CD8-positive, alpha-beta T cell (primary cell): ENCODE measurements at regions of chr1 and their contacts with region 1.

Region 1: DNA sequence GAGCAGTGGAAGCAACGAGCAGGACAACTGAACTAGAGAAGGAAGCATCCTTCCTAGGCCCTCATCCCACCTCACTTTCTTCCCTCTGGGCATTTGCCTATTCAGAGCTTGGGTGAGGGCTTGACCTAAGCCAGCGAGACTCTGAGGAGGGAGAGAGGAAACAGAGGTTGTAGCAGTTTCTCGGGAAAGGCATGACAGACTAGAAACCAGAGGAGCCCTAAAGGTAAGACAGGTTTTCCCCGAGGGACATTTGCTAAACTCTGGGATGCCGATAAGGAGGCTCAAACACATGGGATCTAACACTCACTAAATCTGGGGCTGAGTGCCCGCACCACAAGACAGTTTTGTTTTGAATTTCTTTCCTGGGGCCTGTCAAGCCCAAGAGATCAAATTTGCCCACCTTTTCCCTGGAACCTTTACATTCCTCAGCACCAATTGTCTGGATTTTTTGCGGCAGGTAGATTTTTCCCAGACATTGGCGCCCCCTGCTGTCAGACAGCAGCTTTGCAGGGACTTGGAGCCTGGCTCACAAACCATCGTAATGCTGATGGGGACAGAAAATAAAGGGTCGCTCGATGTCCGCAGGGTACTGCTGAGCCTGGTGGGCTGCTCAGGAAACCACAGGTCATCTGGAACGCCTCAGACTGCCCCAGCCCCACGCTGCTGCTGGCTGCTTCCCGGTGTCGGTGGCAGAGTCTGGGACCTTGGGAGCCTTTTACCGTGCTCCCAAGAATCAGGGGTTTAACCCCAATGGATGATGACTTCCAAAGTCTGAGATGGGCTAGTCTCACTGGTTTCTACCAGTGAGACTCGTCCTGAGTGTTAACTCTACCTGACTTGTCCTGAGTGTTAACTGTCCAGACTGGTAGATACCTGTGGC is 23.4 kb upstream of the TSPAN2 start:
- DNase-seq: peak; percentile 26 to 79 (median 60)
- ATAC-seq: peak; percentile 64
- H3K4me3 ChIP-seq: no peak overlapping the region
- H3K4me3 Mint-ChIP-seq: no peak overlapping the region
- H3K27ac ChIP-seq: no peak overlapping the region
- H3K27ac Mint-ChIP-seq: no peak overlapping the region
- H3K4me1 ChIP-seq: no peaks in the 10 kb centered on the region
- H3K4me1 Mint-ChIP-seq: peaks cover 15% of the 10 kb centered on the region
- H3K27me3 ChIP-seq: no peaks in the 10 kb centered on the region
- H3K27me3 Mint-ChIP-seq: peaks cover 4% of the 10 kb centered on the region
- CTCF ChIP-seq: peak; percentile 99

Region 2: DNA sequence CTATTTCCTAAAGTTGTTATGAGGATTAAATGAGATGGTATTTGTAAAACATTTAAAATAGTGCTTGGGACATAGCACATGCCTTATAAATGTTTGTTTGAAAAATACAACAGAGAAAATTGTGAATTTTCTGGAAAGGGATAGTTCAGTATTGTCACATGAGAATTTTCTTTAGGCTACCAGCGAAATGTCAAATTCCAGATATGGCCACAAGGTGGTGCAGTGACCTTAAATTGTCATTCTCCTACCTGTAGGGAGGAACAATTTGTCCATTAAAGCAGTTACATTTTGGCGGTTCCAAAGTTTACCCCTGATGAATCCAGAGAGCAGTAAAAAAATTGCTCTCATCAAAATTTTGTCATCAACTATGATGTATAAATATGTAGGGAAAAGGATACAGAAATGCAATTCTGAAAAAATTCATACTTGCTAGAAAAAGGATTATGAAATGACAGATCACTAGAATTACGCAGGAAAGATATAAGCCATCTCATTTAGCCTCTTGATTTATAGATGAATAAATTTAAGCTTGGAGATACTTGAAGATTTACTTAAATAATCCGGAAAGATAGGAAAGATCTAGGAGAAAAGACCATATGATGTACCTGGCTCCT is 133.4 kb before region 1 on chr1:
- CTCF ChIA-PET with region 1: interaction called, 77 read pairs
- POLR2A ChIA-PET with region 1: interaction called, 3 read pairs
- intact Hi-C with region 1: loop called (anchors 1 kb)
- DNase-seq: peak; percentile 42 to 79 (median 76)
- ATAC-seq: no peak
- H3K4me3 ChIP-seq: no peak overlapping the region
- H3K4me3 Mint-ChIP-seq: no peak overlapping the region
- H3K27ac ChIP-seq: no peak overlapping the region
- H3K27ac Mint-ChIP-seq: no peak overlapping the region
- H3K4me1 ChIP-seq: no peaks in the 10 kb centered on the region
- H3K4me1 Mint-ChIP-seq: no peaks in the 10 kb centered on the region
- H3K27me3 ChIP-seq: peaks cover 0 to 2% of the 10 kb centered on the region in 2 experiments
- H3K27me3 Mint-ChIP-seq: peaks cover 20% of the 10 kb centered on the region
- CTCF ChIP-seq: peak; percentile 97

Region 3: GRCh38 chr1:114986286-114986685 is 126.5 kb before region 1 on chr1:
- CTCF ChIA-PET with region 1: interaction called, 77 read pairs
- POLR2A ChIA-PET with region 1: interaction called, 3 read pairs
- intact Hi-C with region 1: no loop called
- DNase-seq: no peak
- ATAC-seq: no peak
- H3K4me3 ChIP-seq: no peak overlapping the region
- H3K4me3 Mint-ChIP-seq: no peak overlapping the region
- H3K27ac ChIP-seq: no peak overlapping the region
- H3K27ac Mint-ChIP-seq: no peak overlapping the region
- H3K4me1 ChIP-seq: no peaks in the 10 kb centered on the region
- H3K4me1 Mint-ChIP-seq: no peaks in the 10 kb centered on the region
- H3K27me3 ChIP-seq: no peaks in the 10 kb centered on the region
- H3K27me3 Mint-ChIP-seq: peaks cover 4% of the 10 kb centered on the region
- CTCF ChIP-seq: no peak

Region 4: DNA sequence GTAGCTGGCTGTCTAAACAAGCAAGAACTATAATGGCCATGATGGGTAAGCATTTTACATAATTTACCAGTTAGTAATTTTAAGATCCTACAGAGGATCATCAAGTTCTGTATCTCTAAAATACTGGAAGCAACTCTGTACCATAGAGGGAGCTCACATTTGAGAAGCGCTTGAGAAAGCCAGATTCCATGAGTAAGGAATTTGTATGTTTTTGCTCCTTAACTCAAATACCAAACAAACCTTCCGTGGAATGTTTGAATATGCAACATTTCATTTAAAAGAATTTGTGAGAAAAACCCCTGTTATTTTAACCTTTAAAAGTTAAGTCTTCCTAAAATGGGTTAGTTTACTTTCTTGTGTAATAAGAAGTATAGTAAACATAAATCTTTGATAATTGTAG is 81.1 kb before region 1 on chr1:
- CTCF ChIA-PET with region 1: no interaction called
- POLR2A ChIA-PET with region 1: no interaction called
- intact Hi-C with region 1: no loop called
- DNase-seq: no peak
- ATAC-seq: no peak
- H3K4me3 ChIP-seq: no peak overlapping the region
- H3K4me3 Mint-ChIP-seq: no peak overlapping the region
- H3K27ac ChIP-seq: no peak overlapping the region
- H3K27ac Mint-ChIP-seq: no peak overlapping the region
- H3K4me1 ChIP-seq: no peaks in the 10 kb centered on the region
- H3K4me1 Mint-ChIP-seq: no peaks in the 10 kb centered on the region
- H3K27me3 ChIP-seq: no peaks in the 10 kb centered on the region
- H3K27me3 Mint-ChIP-seq: peaks cover 8% of the 10 kb centered on the region
- CTCF ChIP-seq: no peak

Region 5: GRCh38 chr1:115062542-115063011 is 50.2 kb before region 1 on chr1:
- CTCF ChIA-PET with region 1: interaction called, 17 read pairs
- POLR2A ChIA-PET with region 1: no interaction called
- intact Hi-C with region 1: no loop called
- DNase-seq: peak; percentile 91 to 99 (median 94)
- ATAC-seq: peak; percentile 89
- H3K4me3 ChIP-seq: peak overlapping the region in 1 of 2 experiments; percentile 17
- H3K4me3 Mint-ChIP-seq: peak overlapping the region; percentile 79
- H3K27ac ChIP-seq: peak overlapping the region; percentile 74 to 93
- H3K27ac Mint-ChIP-seq: peak overlapping the region; percentile 100
- H3K4me1 ChIP-seq: peaks cover 35% of the 10 kb centered on the region
- H3K4me1 Mint-ChIP-seq: peaks cover 43% of the 10 kb centered on the region
- H3K27me3 ChIP-seq: no peaks in the 10 kb centered on the region
- H3K27me3 Mint-ChIP-seq: no peaks in the 10 kb centered on the region
- CTCF ChIP-seq: no peak

Region 6: GRCh38 chr1:115098979-115099692 is 13.6 kb before region 1 on chr1:
- CTCF ChIA-PET with region 1: interaction called, 13 read pairs
- POLR2A ChIA-PET with region 1: no interaction called
- intact Hi-C with region 1: no loop called
- DNase-seq: peak; percentile 55 to 96 (median 74)
- ATAC-seq: peak; percentile 89
- H3K4me3 ChIP-seq: peak overlapping the region; percentile 51 to 56
- H3K4me3 Mint-ChIP-seq: peak overlapping the region; percentile 86
- H3K27ac ChIP-seq: peak overlapping the region; percentile 95
- H3K27ac Mint-ChIP-seq: peak overlapping the region; percentile 97
- H3K4me1 ChIP-seq: peaks cover 27% of the 10 kb centered on the region
- H3K4me1 Mint-ChIP-seq: peaks cover 36% of the 10 kb centered on the region
- H3K27me3 ChIP-seq: no peaks in the 10 kb centered on the region
- H3K27me3 Mint-ChIP-seq: no peaks in the 10 kb centered on the region
- CTCF ChIP-seq: no peak

Region 7: DNA sequence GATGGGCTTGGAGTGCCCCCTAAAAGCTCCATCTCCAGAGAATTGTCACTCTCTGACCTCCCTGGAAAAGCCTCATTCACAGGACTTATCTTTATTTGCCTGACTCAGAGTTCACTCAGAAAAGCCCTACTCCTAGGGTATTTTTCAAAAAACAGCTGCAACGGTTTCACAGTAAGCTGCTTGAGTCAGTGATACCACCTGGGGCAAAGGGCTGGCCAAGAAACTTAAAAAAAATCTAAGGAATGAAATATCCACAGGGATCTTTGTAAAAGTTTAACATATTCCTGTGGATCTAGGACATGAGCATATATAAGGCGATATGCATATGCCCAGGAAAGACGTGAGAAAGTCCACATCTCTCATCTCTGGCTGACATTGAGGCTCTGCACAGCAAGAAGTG is 10.4 kb after region 1 on chr1:
- CTCF ChIA-PET with region 1: interaction called, 14 read pairs
- POLR2A ChIA-PET with region 1: no interaction called
- intact Hi-C with region 1: no loop called
- DNase-seq: no peak
- ATAC-seq: no peak
- H3K4me3 ChIP-seq: no peak overlapping the region
- H3K4me3 Mint-ChIP-seq: no peak overlapping the region
- H3K27ac ChIP-seq: no peak overlapping the region
- H3K27ac Mint-ChIP-seq: no peak overlapping the region
- H3K4me1 ChIP-seq: no peaks in the 10 kb centered on the region
- H3K4me1 Mint-ChIP-seq: no peaks in the 10 kb centered on the region
- H3K27me3 ChIP-seq: no peaks in the 10 kb centered on the region
- H3K27me3 Mint-ChIP-seq: peaks cover 22% of the 10 kb centered on the region
- CTCF ChIP-seq: no peak